Pancreas (tissue), 10 donors: ENCODE measurements at regions of chr16 and their contacts with region 1.

Region 1: GRCh38 chr16:28317040-28317880 is 24.9 kb downstream of the SBK1 start:
- DNase-seq: peak in 5 of 6 donors; percentile 23 to 88 (median 65)
- ATAC-seq: peak; percentile 58 to 89 (median 77)
- H3K4me3 ChIP-seq: no peak overlapping the region
- H3K27ac ChIP-seq: no peak overlapping the region
- H3K4me1 ChIP-seq: no peaks in the 10 kb centered on the region
- H3K27me3 ChIP-seq: no peaks in the 10 kb centered on the region
- CTCF ChIP-seq: peak; percentile 81 to 89 (median 86)

Region 2: GRCh38 chr16:28149011-28149888 is 168.0 kb before region 1 on chr16:
- intact Hi-C with region 1: no loop called
- DNase-seq: no peak
- ATAC-seq: peak in 1 of 4 donors; percentile 52
- H3K4me3 ChIP-seq: no peak overlapping the region
- H3K27ac ChIP-seq: no peak overlapping the region
- H3K4me1 ChIP-seq: no peaks in the 10 kb centered on the region
- H3K27me3 ChIP-seq: no peaks in the 10 kb centered on the region
- CTCF ChIP-seq: no peak

Region 3: GRCh38 chr16:28277537-28278388 is 39.5 kb before region 1 on chr16:
- intact Hi-C with region 1: loop called in 2 of 3 experiments (anchors 2 to 5 kb)
- DNase-seq: peak; percentile 64 to 97 (median 86)
- ATAC-seq: peak; percentile 85 to 99 (median 97)
- H3K4me3 ChIP-seq: peak overlapping the region in 2 of 4 donors; percentile 31 to 49
- H3K27ac ChIP-seq: no peak overlapping the region
- H3K4me1 ChIP-seq: no peaks in the 10 kb centered on the region
- H3K27me3 ChIP-seq: no peaks in the 10 kb centered on the region
- CTCF ChIP-seq: peak; percentile 98 to 99 (median 98)

Region 4: DNA sequence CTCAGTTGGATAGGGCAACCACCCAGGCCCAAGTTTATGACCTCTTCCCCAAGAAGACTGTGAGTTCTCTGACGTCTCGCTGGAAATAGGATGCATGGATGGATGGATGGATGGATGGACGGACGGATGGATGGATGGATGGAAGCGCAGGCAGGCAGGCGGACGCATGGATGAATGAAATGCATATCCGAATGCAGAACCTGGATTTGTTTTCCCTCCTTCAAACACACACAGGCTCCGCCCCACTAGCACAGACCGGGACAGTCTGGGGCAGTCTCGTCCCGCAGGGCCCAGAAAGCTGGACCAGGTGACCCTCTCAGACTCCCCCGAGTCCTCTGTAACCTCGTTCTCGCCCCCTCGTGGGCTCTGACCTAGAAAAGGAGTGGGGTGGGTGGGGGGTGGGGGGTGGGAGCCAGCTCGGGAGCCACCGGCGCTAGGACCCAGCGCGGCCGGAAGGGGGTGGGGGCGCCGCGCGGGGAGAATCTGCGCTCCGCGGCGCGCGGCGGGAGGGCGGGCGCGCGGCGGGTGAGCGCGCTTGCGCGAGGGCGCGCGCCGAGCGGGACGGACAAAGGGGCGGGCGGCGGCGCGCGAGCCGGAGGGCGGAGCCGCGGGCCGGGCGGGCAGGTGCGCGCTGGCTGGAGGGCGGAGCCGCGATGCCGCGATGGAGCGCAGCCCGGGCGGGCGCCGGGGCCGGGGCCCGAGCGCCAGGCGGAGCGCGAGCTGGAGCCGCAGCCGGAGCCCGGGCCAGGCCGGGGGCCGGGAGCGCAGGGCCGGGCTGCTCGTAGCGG is 25.2 kb before region 1 on chr16 and contains the start of gene SBK1:
- intact Hi-C with region 1: no loop called
- DNase-seq: peak; percentile 74 to 94 (median 87)
- ATAC-seq: peak; percentile 92 to 97 (median 96)
- H3K4me3 ChIP-seq: peak within 1 kb of the TSS; percentile 49 to 70 (median 60)
- H3K27ac ChIP-seq: peak within 1 kb of the TSS in 3 of 4 donors; percentile 22 to 72 (median 69)
- H3K4me1 ChIP-seq: peaks cover 3 to 9% (median 6%) of the 10 kb centered on the region in 3 donors
- H3K27me3 ChIP-seq: no peaks in the 10 kb centered on the region
- CTCF ChIP-seq: no peak
- total RNA-seq, gene SBK1: 1.3 to 4.0 (median 1.6) TPM